Naive thymus-derived CD4-positive, alpha-beta T cell (primary cell): ENCODE measurements at regions of chr16 and their contacts with region 1.

Region 1: GRCh38 chr16:50368410-50369132 is at the start of gene BRD7:
- DNase-seq: peak; percentile 50 to 82 (median 68)
- ATAC-seq: peak; percentile 98
- H3K4me3 ChIP-seq: peak within 1 kb of the TSS; percentile 61
- H3K4me3 Mint-ChIP-seq: peak within 1 kb of the TSS; percentile 92 to 98 (median 96)
- H3K27ac ChIP-seq: peak within 1 kb of the TSS; percentile 86
- H3K27ac Mint-ChIP-seq: peak within 1 kb of the TSS; percentile 92 to 99 (median 96)
- H3K4me1 ChIP-seq: peaks cover 27 to 39% of the 10 kb centered on the region in 2 donors
- H3K4me1 Mint-ChIP-seq: peaks cover 40 to 58% (median 56%) of the 10 kb centered on the region in 7 donors
- H3K27me3 ChIP-seq: no peaks in the 10 kb centered on the region
- H3K27me3 Mint-ChIP-seq: no peaks in the 10 kb centered on the region
- total RNA-seq, gene BRD7: 80.9 to 91.1 (median 85.0) TPM

Region 2: GRCh38 chr16:50079397-50080140 is 289.0 kb before region 1 on chr16:
- CTCF ChIA-PET with region 1: no interaction called
- POLR2A ChIA-PET with region 1: no interaction called
- intact Hi-C with region 1: no loop called
- DNase-seq: no peak
- ATAC-seq: no peak
- H3K4me3 ChIP-seq: no peak overlapping the region
- H3K4me3 Mint-ChIP-seq: no peak overlapping the region
- H3K27ac ChIP-seq: no peak overlapping the region
- H3K27ac Mint-ChIP-seq: peak overlapping the region in 1 of 9 donors; percentile 6
- H3K4me1 ChIP-seq: no peaks in the 10 kb centered on the region
- H3K4me1 Mint-ChIP-seq: peaks cover 0 to 14% (median 7%) of the 10 kb centered on the region in 7 donors
- H3K27me3 ChIP-seq: no peaks in the 10 kb centered on the region
- H3K27me3 Mint-ChIP-seq: no peaks in the 10 kb centered on the region

Region 3: GRCh38 chr16:50152807-50153452 is 215.6 kb before region 1 on chr16 and contains the start of gene TENT4B:
- CTCF ChIA-PET with region 1: no interaction called
- POLR2A ChIA-PET with region 1: interaction called, 3 read pairs
- intact Hi-C with region 1: loop called (anchors 1 to 2 kb)
- DNase-seq: peak; percentile 87 to 97 (median 96)
- ATAC-seq: peak; percentile 88
- H3K4me3 ChIP-seq: peak within 1 kb of the TSS; percentile 87
- H3K4me3 Mint-ChIP-seq: peak within 1 kb of the TSS; percentile 87 to 99 (median 94)
- H3K27ac ChIP-seq: peak within 1 kb of the TSS; percentile 99
- H3K27ac Mint-ChIP-seq: peak within 1 kb of the TSS; percentile 93 to 99 (median 97)
- H3K4me1 ChIP-seq: peaks cover 16 to 30% of the 10 kb centered on the region in 2 donors
- H3K4me1 Mint-ChIP-seq: peaks cover 28 to 44% (median 40%) of the 10 kb centered on the region in 7 donors
- H3K27me3 ChIP-seq: no peaks in the 10 kb centered on the region
- H3K27me3 Mint-ChIP-seq: no peaks in the 10 kb centered on the region
- total RNA-seq, gene TENT4B: 18.8 to 25.9 (median 23.8) TPM

Region 4: GRCh38 chr16:50627419-50627818 is 258.8 kb after region 1 on chr16:
- CTCF ChIA-PET with region 1: interaction called, 7 read pairs
- POLR2A ChIA-PET with region 1: interaction called, 5 read pairs
- intact Hi-C with region 1: loop called in 1 of 2 experiments (anchors 1 kb)
- DNase-seq: peak in 7 of 9 donors; percentile 29 to 67 (median 57)
- ATAC-seq: peak; percentile 78
- H3K4me3 ChIP-seq: peak overlapping the region; percentile 29
- H3K4me3 Mint-ChIP-seq: peak overlapping the region; percentile 68 to 90 (median 84)
- H3K27ac ChIP-seq: peak overlapping the region; percentile 43
- H3K27ac Mint-ChIP-seq: peak overlapping the region; percentile 71 to 95 (median 88)
- H3K4me1 ChIP-seq: peaks cover 0 to 45% of the 10 kb centered on the region in 2 donors
- H3K4me1 Mint-ChIP-seq: peaks cover 29 to 50% (median 44%) of the 10 kb centered on the region in 7 donors
- H3K27me3 ChIP-seq: no peaks in the 10 kb centered on the region
- H3K27me3 Mint-ChIP-seq: no peaks in the 10 kb centered on the region

Region 5: DNA sequence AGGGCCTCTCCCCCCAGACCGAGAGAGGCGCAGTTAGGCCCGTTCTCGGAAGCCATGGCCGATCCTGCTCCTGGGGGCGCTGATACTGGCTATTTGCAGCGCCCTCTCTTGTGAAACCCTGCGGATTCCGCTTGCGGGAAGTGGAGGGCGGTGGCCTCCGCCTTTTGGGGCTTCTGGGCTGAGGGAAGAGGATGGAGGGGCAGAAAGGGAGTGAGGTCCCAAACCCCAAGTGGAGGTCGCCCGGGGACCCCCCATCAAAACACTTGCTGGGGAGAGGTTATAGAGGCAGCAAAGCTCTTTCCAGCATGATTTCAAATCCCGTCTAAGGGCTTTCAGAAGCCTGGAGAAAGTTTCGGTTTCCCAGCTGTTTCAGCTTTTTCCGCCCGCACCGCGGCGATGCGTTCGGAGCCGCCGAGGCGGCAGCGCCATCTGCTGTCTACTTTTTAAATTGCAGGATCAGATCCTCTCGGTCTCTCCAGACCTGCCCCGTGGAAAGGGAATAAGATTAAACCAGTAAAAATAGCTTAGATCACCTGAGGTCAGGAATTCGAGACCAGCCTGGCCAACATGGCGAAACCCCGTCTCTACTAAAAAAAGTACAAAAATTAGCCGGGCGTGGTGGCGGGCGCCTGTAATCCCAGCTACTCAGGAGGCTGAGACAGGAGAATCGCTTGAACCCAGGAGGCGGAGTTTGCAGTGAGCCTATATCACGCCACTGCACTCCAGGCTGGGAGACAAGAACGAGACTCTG is 296.7 kb after region 1 on chr16:
- CTCF ChIA-PET with region 1: interaction called, 15 read pairs
- POLR2A ChIA-PET with region 1: interaction called, 6 read pairs
- intact Hi-C with region 1: loop called (anchors 1 to 2 kb)
- DNase-seq: peak; percentile 71 to 90 (median 77)
- ATAC-seq: peak; percentile 80
- H3K4me3 ChIP-seq: peak overlapping the region; percentile 60
- H3K4me3 Mint-ChIP-seq: peak overlapping the region; percentile 73 to 87 (median 84)
- H3K27ac ChIP-seq: peak overlapping the region; percentile 62
- H3K27ac Mint-ChIP-seq: peak overlapping the region; percentile 82 to 97 (median 89)
- H3K4me1 ChIP-seq: peaks cover 17% of the 10 kb centered on the region in 2 donors
- H3K4me1 Mint-ChIP-seq: peaks cover 28 to 49% (median 44%) of the 10 kb centered on the region in 7 donors
- H3K27me3 ChIP-seq: no peaks in the 10 kb centered on the region
- H3K27me3 Mint-ChIP-seq: no peaks in the 10 kb centered on the region

Region 6: DNA sequence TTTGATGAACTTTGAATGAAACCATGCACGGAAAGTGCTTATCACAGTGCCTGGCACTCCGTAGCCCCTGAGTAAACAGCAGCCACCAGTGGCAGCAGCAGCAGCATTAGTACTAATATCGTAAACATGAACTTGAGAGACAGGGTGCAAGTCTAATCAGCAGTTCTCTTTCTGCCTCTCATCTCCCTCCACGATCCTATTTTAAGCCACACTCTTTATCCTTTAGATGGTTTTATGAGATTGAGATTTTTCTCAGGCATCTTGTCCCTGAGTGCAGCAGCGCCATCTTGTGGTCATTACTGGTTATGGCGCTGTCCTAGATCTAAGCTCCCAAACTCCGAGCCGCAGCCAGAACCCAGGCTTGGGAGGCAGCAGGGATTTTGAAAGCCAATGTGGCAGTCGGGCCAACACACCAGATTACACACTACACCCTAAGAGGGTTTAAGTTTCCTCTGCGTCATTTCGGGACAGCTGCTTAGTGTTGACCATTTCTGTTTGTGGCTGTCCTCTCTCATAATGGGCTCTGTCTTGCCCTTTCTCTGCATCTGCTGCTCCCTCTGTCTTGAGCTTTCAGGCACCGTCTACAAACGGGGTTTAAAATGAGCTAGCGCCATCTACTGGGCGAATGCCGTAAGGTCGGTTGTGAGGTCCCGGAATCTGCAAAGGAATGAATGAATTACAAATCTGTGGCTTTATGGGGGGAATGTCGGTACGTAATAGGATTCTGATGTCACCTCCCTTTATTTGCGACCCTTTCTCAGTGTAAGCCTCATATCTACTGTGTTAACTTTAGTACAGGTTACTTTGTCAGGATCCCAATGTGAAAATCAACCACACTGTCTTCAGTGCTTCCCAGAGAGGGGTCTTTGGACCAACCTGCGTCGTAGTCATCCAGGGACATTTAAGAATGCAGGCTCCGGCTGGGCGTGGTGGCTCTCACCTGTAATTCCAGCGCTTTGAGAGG is 437.8 kb after region 1 on chr16:
- CTCF ChIA-PET with region 1: interaction called, 3 read pairs
- POLR2A ChIA-PET with region 1: no interaction called
- intact Hi-C with region 1: loop called (anchors 1 to 2 kb)
- DNase-seq: peak; percentile 66 to 92 (median 89)
- ATAC-seq: peak; percentile 98
- H3K4me3 ChIP-seq: peak overlapping the region; percentile 34
- H3K4me3 Mint-ChIP-seq: peak overlapping the region; percentile 12 to 90 (median 80)
- H3K27ac ChIP-seq: no peak overlapping the region
- H3K27ac Mint-ChIP-seq: peak overlapping the region; percentile 15 to 92 (median 81)
- H3K4me1 ChIP-seq: peaks cover 3 to 5% of the 10 kb centered on the region in 2 donors
- H3K4me1 Mint-ChIP-seq: peaks cover 8 to 19% (median 13%) of the 10 kb centered on the region in 7 donors
- H3K27me3 ChIP-seq: no peaks in the 10 kb centered on the region
- H3K27me3 Mint-ChIP-seq: no peaks in the 10 kb centered on the region